Psoas muscle (tissue), 8 donors: ENCODE measurements at regions of chr15 and their contacts with region 1.

Region 1: DNA sequence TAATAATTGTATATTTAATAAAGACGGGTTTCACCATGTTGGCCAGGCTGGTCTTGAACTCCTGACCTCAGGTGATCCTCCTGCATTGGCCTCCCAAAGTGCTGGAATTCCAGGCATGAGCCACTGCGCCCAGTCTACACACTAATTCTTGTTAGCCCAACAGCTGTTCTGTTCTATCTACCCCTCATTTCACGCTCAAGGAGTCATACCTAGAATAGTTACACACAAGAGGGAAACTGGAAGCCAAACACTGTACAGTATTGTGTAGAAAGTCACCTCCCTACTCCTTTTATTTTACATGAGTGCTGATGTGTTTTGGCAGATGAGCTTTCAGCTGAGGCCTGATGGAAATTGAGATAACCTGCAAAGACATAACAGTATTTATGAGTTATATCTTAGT is 13.4 kb upstream of the CTDSPL2 start:
- DNase-seq: no peak
- ATAC-seq: no peak
- H3K4me3 ChIP-seq: no peak overlapping the region
- H3K27ac ChIP-seq: no peak overlapping the region
- H3K4me1 ChIP-seq: no peaks in the 10 kb centered on the region
- H3K27me3 ChIP-seq: no peaks in the 10 kb centered on the region
- CTCF ChIP-seq: no peak

Region 2: DNA sequence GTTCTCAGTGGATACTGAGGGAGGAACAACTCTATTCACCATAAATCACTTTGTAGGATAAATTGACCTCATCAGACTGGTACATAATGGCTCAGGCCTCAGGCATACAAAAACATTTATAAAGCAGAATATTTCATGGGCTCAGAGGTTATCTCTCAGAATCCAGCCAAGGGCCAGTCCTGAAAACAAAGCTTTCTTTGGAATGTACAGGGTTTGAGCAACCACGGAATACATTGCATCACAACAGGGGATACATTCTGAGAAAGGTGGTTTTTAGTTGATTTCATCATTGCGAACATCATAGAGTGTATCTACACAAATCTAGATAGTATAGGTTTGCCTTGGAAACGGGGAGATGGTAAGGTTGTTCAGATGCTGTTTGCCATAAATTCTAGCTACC is 19.9 kb before region 1 on chr15:
- intact Hi-C with region 1: loop called in 1 of 2 experiments (anchors 1 kb)
- DNase-seq: no peak
- ATAC-seq: no peak
- H3K4me3 ChIP-seq: no peak overlapping the region
- H3K27ac ChIP-seq: no peak overlapping the region
- H3K4me1 ChIP-seq: no peaks in the 10 kb centered on the region
- H3K27me3 ChIP-seq: no peaks in the 10 kb centered on the region
- CTCF ChIP-seq: no peak